ENCODE measurements at regions of chr5 and their contacts with region 1.

Region 1: DNA sequence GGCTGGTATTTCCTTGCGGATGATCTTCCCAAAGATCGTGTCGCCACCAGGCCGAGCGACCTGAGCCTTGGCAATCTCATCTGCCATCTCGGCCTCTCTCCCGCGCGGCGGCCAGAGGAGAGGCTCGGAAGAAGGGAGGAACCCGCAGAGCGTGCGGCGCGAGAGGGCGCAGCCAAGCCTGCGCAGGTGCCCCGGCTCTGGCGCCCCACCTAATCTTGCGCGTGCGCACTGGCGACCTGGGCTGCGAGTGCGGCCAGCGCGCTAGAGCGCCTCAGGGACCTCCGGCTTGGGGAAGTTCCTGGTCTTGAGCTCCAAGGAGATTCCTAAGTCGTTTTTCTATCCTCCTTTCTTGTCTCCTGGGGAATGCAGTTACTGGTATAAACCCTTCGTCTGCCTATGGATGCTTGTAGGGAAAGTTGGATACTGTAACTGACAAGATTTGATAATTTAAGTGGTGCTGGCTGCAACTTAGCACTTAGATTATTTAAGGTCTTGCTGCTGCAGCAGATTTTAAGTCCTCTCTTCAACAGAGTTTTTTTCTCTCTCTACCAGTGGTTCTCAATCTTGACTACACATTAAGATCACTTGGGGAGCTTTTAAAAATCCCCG is at the start of gene HINT1:
- DNase-seq: peak; percentile 97
- H3K4me3 ChIP-seq: peak within 1 kb of the TSS; percentile 74
- H3K27ac ChIP-seq: peak within 1 kb of the TSS; percentile 75
- H3K4me1 ChIP-seq: peaks cover 28% of the 10 kb centered on the region
- CTCF ChIP-seq: peak; percentile 29; the same call in 1 of the 2 replicates
- total RNA-seq, gene HINT1: 205 and 343 TPM in 2 replicates

Region 2: DNA sequence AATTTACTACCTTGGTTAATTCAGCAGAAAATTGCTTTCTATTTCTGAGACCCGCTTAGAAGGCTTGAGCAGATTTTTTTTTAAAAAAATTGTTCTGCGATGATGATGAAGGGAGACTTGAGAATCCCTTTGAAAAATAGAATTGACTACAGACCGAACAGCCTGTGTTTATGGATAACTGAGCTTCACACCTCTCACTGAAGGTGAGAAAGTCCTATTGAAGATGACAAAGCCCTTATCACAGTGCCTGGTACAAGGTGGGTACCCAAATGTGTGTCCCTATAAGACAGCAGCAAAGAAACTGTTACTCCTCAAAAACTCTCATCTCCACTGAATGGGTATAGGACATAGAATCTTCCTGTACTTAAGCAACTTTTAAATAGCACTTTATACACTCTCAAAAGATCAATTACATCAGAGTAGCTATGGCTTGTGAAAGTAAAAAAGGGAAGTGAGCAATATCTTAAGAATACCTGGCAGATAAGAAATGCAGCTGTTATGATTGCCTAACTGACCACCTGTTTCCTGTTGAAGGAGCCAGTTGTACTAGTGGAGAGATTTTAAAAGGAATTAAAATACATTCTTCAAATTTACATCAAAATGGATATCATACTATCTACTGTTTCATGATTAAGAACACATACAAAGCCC is 841.3 kb before region 1 on chr5:
- CTCF ChIA-PET with region 1: no interaction called
- POLR2A ChIA-PET with region 1: no interaction called
- intact Hi-C with region 1: loop called (anchors 2 kb)
- DNase-seq: peak; percentile 93
- H3K4me3 ChIP-seq: peak overlapping the region; percentile 41
- H3K27ac ChIP-seq: peak overlapping the region; percentile 97
- H3K4me1 ChIP-seq: peaks cover 42% of the 10 kb centered on the region
- CTCF ChIP-seq: no peak

Region 3: DNA sequence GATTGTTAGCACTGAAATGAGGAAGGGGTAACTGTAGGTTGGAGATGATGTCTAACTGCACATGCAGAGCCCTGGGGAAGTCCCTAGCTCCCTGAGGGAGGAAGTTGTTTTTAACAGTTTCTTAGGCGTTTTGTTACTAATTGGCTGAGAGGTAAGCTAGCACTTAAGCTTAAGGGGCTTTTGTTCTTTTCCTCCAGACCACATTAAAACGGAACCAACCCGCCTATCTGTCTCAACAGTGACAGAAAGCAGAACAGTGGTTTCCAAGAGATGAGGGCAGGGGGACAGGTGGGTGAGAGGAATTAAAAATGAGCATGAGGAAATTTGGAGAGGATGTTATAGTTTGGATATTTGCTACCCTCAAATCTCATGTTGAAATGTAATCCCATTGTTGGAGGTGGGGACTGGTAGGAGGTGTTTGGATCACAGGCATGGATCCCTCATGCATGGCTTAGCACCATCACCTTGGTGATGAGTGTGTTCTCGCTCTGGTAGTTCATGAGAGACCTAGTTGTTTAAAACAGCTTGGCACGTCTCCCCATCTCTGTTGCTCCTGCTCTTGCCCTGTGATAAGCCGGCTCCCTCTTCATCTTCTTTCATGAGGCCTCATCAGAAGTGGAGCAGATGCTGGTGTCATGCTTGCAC is 44.4 kb after region 1 on chr5:
- CTCF ChIA-PET with region 1: interaction called, 3 read pairs
- POLR2A ChIA-PET with region 1: interaction called, 4 read pairs
- intact Hi-C with region 1: loop called (anchors 1 kb)
- DNase-seq: peak; percentile 94
- H3K4me3 ChIP-seq: peak overlapping the region; percentile 68
- H3K27ac ChIP-seq: peak overlapping the region; percentile 96
- H3K4me1 ChIP-seq: peaks cover 67% of the 10 kb centered on the region
- CTCF ChIP-seq: no peak

Region 4: DNA sequence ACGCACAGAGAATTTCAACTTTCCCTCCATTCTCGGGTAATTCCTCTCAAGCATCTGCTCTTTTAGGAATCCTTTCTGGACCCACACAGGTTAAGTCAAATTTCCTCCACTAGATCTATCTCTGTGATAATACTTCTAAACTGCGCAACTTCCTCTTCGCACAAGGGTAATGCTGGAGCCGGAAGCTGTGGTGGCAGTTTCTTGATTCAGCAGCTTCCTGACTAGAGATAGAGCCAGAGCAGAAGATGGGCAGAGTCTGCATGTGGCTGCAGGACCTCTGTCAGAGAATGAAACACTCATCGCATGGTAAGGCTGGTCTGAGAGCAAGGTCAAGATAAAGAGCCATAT is 87.6 kb after region 1 on chr5:
- CTCF ChIA-PET with region 1: no interaction called
- POLR2A ChIA-PET with region 1: interaction called, 10 read pairs
- intact Hi-C with region 1: loop called (anchors 2 kb)
- DNase-seq: peak; percentile 91
- H3K4me3 ChIP-seq: peak overlapping the region; percentile 67
- H3K27ac ChIP-seq: peak overlapping the region; percentile 80
- H3K4me1 ChIP-seq: peaks cover 60% of the 10 kb centered on the region
- CTCF ChIP-seq: no peak

Region 5: GRCh38 chr5:131382407-131383395 is 217.5 kb after region 1 on chr5:
- CTCF ChIA-PET with region 1: interaction called, 9 read pairs
- POLR2A ChIA-PET with region 1: interaction called, 9 read pairs
- intact Hi-C with region 1: loop called (anchors 1 kb)
- DNase-seq: peak; percentile 87
- H3K4me3 ChIP-seq: no peak overlapping the region
- H3K27ac ChIP-seq: peak overlapping the region; percentile 87
- H3K4me1 ChIP-seq: peaks cover 60% of the 10 kb centered on the region
- CTCF ChIP-seq: peak; percentile 87

Region 6: GRCh38 chr5:131634996-131635754 is 470.0 kb after region 1 on chr5 and contains the start of gene RAPGEF6:
- CTCF ChIA-PET with region 1: no interaction called
- POLR2A ChIA-PET with region 1: interaction called, 5 read pairs
- intact Hi-C with region 1: loop called (anchors 10 kb)
- DNase-seq: peak; percentile 100
- H3K4me3 ChIP-seq: peak within 1 kb of the TSS; percentile 87
- H3K27ac ChIP-seq: peak within 1 kb of the TSS; percentile 98
- H3K4me1 ChIP-seq: peaks cover 51% of the 10 kb centered on the region
- CTCF ChIP-seq: no peak; the same call in 1 of the 2 replicates
- total RNA-seq, gene RAPGEF6: 39.6 and 54.4 TPM in 2 replicates

Region 7: GRCh38 chr5:131796793-131797693 is 631.8 kb after region 1 on chr5 and contains the start of gene FNIP1:
- CTCF ChIA-PET with region 1: no interaction called
- POLR2A ChIA-PET with region 1: no interaction called
- intact Hi-C with region 1: loop called (anchors 10 kb)
- DNase-seq: peak; percentile 97
- H3K4me3 ChIP-seq: peak within 1 kb of the TSS; percentile 87
- H3K27ac ChIP-seq: peak within 1 kb of the TSS; percentile 43
- H3K4me1 ChIP-seq: peaks cover 35% of the 10 kb centered on the region
- CTCF ChIP-seq: no peak
- total RNA-seq, gene FNIP1: 16.1 and 19.4 TPM in 2 replicates

Measured in OCI-LY7 (cell line).